Natural killer cell (primary cell): ENCODE measurements at regions of chr17 and their contacts with region 1.

Region 1: DNA sequence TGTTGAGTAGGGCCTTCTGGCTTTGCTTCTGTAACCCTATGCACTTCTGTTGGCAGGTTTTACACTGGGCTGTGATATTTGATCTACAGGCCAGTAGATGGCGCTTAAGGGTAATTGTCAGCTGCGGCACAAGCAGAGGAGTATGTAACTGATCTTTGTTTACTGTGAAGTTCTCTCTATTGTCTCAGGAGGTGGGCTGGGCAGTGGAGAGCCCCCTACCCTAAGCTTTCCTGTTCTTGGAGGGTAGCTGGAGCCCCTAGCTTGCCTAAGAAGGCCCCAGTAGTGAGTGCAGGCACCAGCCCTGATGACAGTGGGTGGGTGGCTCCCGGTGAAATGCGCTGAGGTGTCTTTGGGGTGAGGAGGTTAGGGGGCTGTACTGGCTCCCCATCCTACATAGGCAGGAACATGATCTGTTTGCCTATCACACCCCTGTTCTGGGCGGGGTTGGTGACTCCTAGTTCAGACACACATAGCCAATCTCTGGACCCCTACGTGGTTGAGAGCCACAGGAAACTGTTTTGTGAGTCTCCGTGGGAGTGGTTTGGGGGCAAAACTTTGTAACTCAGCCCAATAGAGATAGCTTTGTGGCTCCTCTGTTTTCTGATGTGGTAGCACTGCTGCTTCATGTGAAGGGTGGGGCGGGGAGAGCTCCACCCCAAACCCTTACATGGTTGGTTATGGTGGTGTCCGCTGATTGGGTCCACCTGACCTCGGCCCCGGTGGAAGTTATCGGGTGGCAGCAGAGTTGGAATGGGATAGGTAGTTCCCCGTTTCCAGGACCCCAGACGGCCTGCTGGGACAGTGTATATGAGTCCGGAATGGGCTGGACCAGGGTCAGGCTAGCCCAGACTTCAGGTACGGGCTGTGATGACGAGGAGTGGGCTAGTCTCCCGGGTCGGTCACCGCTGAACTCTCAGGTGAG is 60.4 kb downstream of the SLFN11 start:
- DNase-seq: peak; percentile 83 to 96
- ATAC-seq: peak; percentile 87 to 95 (median 89)
- H3K4me3 ChIP-seq: peak overlapping the region; percentile 73
- H3K4me3 Mint-ChIP-seq: peak overlapping the region; percentile 99
- H3K27ac ChIP-seq: peak overlapping the region; percentile 90
- H3K27ac Mint-ChIP-seq: peak overlapping the region; percentile 99 to 100
- H3K4me1 ChIP-seq: peaks cover 22% of the 10 kb centered on the region
- H3K4me1 Mint-ChIP-seq: peaks cover 47 to 55% of the 10 kb centered on the region in 2 donors
- H3K27me3 ChIP-seq: no peaks in the 10 kb centered on the region
- H3K27me3 Mint-ChIP-seq: no peaks in the 10 kb centered on the region
- CTCF ChIP-seq: peak; percentile 93

Region 2: DNA sequence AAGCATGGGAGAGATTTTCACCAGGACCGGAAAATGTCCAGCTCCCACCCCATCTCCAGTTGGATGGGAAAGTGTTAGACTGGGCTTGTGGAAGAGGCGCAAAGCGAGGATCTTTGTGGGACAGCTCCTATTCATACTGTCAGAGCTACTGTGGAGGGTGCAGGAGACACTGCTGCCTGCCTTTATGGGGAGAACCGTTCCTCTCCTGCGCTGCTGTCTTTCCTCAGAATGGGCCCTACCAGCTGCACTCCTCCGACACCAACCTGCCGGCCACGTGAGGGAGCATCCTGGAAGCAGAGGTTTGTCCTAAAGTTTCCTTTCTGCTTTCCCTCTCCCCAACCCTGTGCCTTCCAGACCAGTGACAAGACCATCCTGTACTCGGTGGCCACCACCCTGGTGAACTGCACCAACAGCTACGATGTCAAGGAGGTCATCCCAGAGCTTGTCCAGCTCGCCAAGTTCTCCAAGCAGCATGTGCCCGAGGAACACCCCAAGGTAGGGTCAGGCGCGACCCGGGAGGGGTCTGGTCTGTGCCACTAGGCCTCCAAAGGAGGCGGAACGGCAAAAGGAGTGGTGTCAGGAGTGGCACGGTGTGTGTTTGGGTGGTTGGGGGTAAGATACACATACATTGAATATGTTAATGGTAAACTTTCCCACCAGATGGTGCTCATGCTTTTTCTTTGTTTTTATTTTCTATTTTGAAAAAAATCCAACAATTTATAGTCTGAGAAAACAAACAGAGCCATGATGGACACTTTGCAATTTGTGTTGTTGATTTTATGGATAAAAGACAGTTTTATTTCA is 141.9 kb before region 1 on chr17:
- intact Hi-C with region 1: loop called (anchors 2 kb)
- DNase-seq: peak; percentile 20 to 71
- ATAC-seq: peak; percentile 69 to 87 (median 83)
- H3K4me3 ChIP-seq: no peak overlapping the region
- H3K4me3 Mint-ChIP-seq: peak overlapping the region; percentile 4
- H3K27ac ChIP-seq: no peak overlapping the region
- H3K27ac Mint-ChIP-seq: peak overlapping the region in 1 of 2 donors; percentile 72
- H3K4me1 ChIP-seq: peaks cover 12% of the 10 kb centered on the region
- H3K4me1 Mint-ChIP-seq: peaks cover 10 to 32% of the 10 kb centered on the region in 2 donors
- H3K27me3 ChIP-seq: no peaks in the 10 kb centered on the region
- H3K27me3 Mint-ChIP-seq: no peaks in the 10 kb centered on the region
- CTCF ChIP-seq: peak; percentile 66

Region 3: DNA sequence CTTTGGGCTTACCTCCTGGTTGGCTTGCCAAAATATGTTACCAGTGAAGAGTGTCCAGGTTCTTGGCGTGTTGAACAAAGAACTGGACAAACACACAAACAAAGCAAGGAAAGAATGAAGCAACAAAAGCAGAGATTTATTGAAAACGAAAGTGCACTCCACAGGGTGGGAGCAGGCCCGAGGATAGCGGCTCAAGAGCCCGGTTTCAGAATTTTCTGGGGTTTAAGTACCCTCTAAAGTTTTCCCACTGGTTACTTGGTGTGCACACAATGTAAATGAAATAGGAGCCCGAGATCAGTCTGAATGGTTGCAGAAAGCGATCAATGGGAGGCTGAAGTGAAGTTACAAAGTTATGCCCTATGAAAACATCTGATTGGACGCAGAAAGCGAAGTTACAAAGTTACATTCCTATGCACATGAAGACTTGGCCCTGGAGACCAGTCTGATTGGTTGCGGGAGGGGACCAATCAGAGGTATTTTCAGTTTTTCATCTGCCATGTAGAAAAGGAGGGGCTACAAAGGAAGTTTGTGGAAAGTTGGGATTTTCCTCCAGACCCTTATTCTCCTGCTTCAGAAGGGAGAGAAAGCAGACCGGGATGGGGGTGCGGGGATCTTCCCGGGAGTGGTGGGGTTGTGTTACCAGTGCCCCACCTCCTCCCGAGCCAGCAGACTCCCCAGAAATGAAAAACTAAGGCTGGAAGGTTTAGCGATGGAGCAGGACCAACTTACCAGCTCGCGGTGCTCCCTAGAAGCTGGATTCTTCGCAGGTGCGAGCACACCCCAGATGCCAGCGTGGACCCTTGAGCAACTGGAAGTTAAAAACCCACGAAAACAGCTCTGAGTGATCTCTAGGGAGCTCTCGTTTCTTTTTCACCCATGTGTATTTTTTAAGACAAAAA is 119.4 kb after region 1 on chr17 and contains the start of gene SLFN12:
- intact Hi-C with region 1: loop called (anchors 5 kb)
- DNase-seq: peak; percentile 47 to 84
- ATAC-seq: peak; percentile 83 to 90 (median 89)
- H3K4me3 ChIP-seq: peak within 1 kb of the TSS; percentile 62
- H3K4me3 Mint-ChIP-seq: peak within 1 kb of the TSS; percentile 99
- H3K27ac ChIP-seq: peak within 1 kb of the TSS; percentile 55
- H3K27ac Mint-ChIP-seq: peak within 1 kb of the TSS; percentile 95 to 96
- H3K4me1 ChIP-seq: peaks cover 33% of the 10 kb centered on the region
- H3K4me1 Mint-ChIP-seq: peaks cover 63% of the 10 kb centered on the region in 2 donors
- H3K27me3 ChIP-seq: no peaks in the 10 kb centered on the region
- H3K27me3 Mint-ChIP-seq: no peaks in the 10 kb centered on the region
- CTCF ChIP-seq: no peak
- total RNA-seq, gene SLFN12: 18.6 to 30.9 (median 21.8) TPM

Region 4: DNA sequence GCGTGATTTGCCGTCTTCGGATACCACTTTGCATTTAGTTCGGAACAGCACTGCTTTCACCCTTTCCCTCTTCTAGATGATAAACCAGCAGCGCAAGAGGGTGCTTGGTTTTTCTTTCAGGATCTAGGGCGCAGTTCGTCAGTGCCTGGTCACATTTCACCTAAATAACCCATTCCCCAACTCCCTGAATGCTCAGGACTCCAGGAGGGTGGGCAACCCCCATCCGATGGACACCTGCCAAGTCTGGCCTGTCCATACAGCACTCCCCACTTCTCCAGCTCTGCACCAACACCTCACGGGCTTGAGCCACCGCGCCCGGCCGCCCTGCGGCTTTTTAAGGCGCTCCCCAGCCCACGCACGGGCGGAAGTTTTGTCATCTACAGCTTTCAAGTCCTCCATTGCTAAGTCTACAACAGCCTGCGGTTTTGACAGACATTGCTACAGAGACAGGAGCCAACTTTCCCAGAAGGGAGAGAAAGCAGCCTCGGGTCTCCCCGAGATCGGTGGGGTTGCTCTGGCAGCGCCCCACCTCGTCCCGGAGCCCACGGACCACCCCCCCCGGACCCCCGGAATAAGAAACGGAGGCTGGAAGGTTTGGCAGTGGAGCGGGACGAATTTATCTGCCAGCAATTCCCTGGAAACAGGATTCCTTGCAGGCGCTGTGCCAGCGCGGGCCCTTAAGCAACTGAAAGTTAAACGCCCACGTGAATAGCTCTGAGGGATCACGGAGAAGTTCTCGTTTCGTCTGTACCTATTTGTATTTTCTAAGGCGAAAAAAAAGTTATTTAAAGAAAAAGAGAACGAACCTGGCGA is 174.1 kb after region 1 on chr17:
- intact Hi-C with region 1: loop called (anchors 1 kb)
- DNase-seq: peak; percentile 72 to 87
- ATAC-seq: peak; percentile 50 to 77 (median 72)
- H3K4me3 ChIP-seq: peak overlapping the region; percentile 86
- H3K4me3 Mint-ChIP-seq: peak overlapping the region; percentile 97
- H3K27ac ChIP-seq: peak overlapping the region; percentile 95
- H3K27ac Mint-ChIP-seq: peak overlapping the region; percentile 94 to 97
- H3K4me1 ChIP-seq: peaks cover 35% of the 10 kb centered on the region
- H3K4me1 Mint-ChIP-seq: peaks cover 85 to 88% of the 10 kb centered on the region in 2 donors
- H3K27me3 ChIP-seq: no peaks in the 10 kb centered on the region
- H3K27me3 Mint-ChIP-seq: no peaks in the 10 kb centered on the region
- CTCF ChIP-seq: no peak

Region 5: DNA sequence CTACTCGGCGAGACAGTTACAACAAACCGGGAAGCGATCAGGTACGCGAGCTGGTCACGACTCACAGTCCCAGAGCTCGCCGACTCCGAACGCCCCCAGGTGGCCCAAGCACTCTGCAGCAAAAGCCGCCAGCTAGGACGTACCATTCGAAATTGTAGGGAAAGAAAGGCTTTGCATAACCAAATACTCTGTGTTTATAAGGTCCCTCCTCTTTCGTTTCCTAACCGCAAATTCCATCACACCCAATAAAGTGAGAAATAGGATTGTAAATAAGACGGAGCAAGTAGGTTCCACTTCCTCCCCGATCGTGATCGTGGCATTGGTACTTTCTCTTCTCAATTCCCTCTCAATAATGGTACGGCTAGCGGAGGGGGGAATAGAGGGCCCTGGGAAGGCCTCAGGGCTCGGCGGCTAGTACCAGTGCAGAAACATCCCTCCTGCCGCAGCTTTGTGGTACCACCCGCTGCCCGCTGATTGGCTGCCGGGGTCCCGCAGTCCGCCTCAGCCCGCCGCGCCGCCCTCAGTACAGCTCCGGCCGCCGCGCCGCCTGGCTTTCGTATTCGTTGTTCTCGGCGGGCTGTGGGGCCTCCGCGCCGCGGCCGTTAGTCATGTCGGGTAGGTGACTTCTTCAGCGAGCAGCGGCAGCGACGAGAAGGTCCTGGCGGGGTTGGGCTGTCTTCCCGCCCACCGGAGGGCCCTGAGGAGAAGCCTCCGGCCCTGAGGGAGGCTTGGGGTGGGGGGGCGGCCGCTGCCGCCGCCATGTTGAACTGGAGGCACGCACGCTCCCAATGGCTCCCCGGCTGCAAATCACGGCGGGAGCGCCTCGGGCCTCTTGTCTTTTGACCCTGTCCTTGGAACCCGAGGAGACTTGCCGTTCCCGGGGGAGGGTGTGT is 496.2 kb after region 1 on chr17 and contains the start of gene TAF15:
- intact Hi-C with region 1: loop called (anchors 5 kb)
- DNase-seq: peak; percentile 97
- ATAC-seq: peak; percentile 90 to 98 (median 92)
- H3K4me3 ChIP-seq: peak within 1 kb of the TSS; percentile 91
- H3K4me3 Mint-ChIP-seq: peak within 1 kb of the TSS; percentile 90
- H3K27ac ChIP-seq: peak within 1 kb of the TSS; percentile 94
- H3K27ac Mint-ChIP-seq: peak within 1 kb of the TSS; percentile 98
- H3K4me1 ChIP-seq: peaks cover 18% of the 10 kb centered on the region
- H3K4me1 Mint-ChIP-seq: peaks cover 52 to 55% of the 10 kb centered on the region in 2 donors
- H3K27me3 ChIP-seq: no peaks in the 10 kb centered on the region
- H3K27me3 Mint-ChIP-seq: no peaks in the 10 kb centered on the region
- CTCF ChIP-seq: peak; percentile 81
- total RNA-seq, gene TAF15: 214 to 253 (median 214) TPM